PC-9 (cell line): ENCODE measurements at regions of chr3 and their contacts with region 1.

Region 1: DNA sequence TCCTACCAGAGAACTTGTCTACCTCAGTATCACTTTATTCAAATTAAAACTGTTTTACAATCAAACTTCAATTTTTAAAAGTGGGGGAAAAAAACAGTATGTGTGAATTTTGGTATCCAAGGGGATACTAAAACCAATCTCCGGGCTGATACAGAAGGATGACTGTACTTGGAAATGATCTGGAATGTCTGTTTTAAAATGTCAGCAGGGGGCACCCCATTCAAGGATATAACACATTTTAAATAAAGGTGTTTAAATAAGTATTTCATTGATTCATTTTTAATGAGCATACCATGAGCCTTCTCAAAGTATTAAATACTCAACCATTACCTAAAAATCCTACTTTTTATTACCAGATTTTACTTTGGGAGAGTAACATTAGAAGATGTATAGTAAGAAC is 67.9 kb downstream of the ULK4 start:
- DNase-seq: peak in 1 of 2 experiments; percentile 7
- H3K4me3 ChIP-seq: no peak overlapping the region
- H3K27ac ChIP-seq: no peak overlapping the region
- H3K4me1 ChIP-seq: no peaks in the 10 kb centered on the region
- H3K27me3 ChIP-seq: no peaks in the 10 kb centered on the region
- CTCF ChIP-seq: peak; percentile 71

Region 2: DNA sequence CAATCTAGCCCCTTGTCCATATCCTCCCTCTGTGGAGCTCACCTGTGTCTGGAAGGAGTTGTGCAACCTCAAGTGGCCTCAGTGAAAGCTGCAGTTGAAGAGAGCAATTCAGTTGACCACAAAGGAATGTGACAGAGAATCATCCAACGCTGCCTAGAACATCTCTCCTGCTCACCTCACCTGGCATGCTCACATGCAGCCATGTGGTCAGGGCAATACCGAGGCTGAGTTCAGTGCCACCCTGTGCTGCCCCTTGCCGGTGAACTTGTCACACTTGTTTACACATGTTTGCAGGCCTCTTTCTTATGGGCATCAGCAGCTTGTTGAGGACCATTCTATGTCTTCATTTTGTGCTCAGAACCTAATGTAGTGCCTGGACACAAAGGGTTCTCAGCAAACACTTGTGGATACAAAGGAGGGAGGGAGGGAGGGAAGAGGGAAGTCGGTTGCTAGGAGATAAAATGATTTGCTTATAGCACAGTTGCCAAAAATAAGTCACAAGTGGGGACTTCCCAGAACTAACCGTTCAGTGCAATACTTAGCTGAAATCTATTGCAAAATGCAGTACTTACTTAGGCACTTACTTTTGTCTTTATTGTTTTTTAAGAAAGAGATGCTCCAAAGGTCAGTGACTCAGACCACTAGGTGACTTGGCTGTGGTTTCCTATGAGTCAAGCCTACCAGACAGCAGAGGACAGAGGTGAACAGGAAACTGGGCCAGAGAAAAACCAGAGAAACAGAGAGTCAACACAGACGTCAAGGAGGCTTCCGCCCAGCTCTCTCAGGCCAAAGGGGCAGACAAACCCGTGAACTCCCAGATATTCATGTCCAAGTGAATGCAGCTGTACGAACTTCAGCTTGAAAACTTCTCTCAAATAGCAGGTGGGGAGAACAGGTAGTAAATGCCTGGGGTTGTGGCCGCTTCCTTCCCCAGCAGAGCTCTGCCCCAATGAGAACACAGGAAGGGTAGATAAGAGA is 922.5 kb before region 1 on chr3:
- CTCF ChIA-PET with region 1: no interaction called
- POLR2A ChIA-PET with region 1: no interaction called
- intact Hi-C with region 1: no loop called
- DNase-seq: peak; percentile 75 to 98
- H3K4me3 ChIP-seq: no peak overlapping the region; the same call in 1 of the 2 replicates
- H3K27ac ChIP-seq: peak overlapping the region; percentile 92
- H3K4me1 ChIP-seq: peaks cover 32% of the 10 kb centered on the region
- H3K27me3 ChIP-seq: no peaks in the 10 kb centered on the region
- CTCF ChIP-seq: no peak; the same call in 1 of the 2 replicates

Region 3: DNA sequence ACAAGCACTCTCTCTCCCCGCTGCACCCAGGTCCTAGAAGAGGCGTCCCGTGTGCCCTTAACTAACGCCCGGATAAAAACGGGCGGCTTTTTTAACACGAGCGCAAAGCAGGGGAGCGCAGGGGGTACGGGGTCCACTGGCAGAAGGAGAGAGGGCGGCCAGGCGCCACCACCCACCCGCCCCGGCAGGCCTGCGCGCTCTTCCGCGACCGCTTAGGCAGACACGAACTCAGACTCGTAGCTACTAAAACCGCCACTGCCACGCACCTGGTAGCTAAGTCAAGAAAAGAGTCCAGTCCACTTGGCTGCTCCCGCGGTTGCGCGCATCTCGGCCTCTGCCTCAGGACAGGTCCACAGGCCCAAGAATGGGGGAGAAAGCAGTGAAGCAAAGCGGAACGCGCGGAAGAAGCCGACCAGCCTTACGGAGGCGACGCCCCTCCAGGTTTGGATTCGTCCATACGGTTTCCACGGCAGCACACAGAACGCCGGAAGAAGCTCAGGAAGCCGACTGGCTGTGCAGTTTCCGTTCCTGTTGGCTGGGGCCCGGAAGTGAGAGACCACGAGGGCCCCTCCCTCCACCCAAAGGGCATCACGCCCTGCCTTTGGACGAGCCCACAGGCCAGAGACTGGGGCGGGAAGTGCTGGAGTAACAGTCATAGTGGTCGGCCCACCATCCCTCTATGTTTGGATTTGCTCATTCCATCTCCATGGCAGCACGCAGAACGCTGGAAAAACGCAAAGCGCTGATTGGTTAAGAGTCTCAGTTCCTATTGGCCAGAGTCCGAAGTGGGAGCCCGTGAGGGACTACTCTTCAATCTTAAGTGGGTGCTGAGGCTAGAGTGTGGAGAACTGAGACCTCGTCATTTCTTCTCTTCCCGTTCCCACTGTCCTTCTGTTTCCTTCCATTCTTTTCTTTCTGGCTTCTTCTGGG is 68.0 kb after region 1 on chr3 and contains the start of gene ULK4:
- CTCF ChIA-PET with region 1: no interaction called
- POLR2A ChIA-PET with region 1: no interaction called
- intact Hi-C with region 1: no loop called
- DNase-seq: peak; percentile 97
- H3K4me3 ChIP-seq: peak within 1 kb of the TSS; percentile 93
- H3K27ac ChIP-seq: peak within 1 kb of the TSS; percentile 18; the same call in 1 of the 2 replicates
- H3K4me1 ChIP-seq: 0 out of 2 replicates have a peak, but pooled peaks cover 14% of the 10 kb centered on the region
- H3K27me3 ChIP-seq: no peaks in the 10 kb centered on the region
- CTCF ChIP-seq: no peak
- total RNA-seq, gene ULK4: 5.9 and 8.7 TPM in 2 replicates

Region 4: GRCh38 chr3:42012935-42013690 is 119.1 kb after region 1 on chr3:
- CTCF ChIA-PET with region 1: no interaction called
- POLR2A ChIA-PET with region 1: no interaction called
- intact Hi-C with region 1: loop called (anchors 10 kb)
- DNase-seq: peak in 1 of 2 experiments; percentile 55
- H3K4me3 ChIP-seq: peak overlapping the region; percentile 66; the same call in 1 of the 2 replicates
- H3K27ac ChIP-seq: no peak overlapping the region
- H3K4me1 ChIP-seq: peaks cover 14% of the 10 kb centered on the region; the same call in 1 of the 2 replicates
- H3K27me3 ChIP-seq: no peaks in the 10 kb centered on the region
- CTCF ChIP-seq: no peak

Region 5: DNA sequence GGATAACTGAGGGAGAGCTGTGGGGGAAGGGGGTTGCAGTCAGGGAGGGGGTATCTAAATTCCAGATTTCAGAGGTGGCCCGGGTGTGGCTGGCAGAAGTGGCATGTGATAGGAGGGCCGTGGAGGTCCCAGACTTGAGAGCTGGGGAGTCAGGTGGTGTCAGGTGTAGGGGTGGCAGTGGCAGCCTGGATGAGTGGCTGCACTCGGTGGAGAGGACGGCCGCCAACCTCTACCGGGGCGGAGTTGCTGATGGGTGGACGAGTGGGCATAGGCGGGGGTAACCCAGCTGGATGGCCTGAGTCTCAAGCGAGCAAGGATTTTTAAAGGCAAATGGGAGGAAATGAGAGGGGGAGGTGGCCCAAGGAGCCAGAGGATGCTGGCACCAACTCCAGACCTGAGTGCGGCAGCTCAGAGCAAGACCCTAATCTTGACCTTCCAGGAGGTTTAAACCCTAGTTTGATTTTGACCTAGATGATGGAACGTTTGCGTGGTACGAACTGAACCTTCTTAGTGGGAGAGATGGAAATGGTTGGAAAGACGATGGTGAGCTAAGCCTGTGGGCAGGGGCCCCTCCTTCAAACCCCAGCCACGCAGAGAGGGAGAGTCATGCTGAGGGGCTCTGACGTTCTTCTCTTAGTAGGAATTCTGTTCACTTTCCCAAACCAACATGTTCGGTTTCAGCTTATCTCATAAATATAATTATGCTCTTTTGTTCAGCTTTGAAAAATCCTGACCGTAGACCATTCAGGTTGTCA is 205.2 kb after region 1 on chr3:
- CTCF ChIA-PET with region 1: interaction called, 5 read pairs
- POLR2A ChIA-PET with region 1: no interaction called
- intact Hi-C with region 1: loop called (anchors 1 kb)
- DNase-seq: no peak
- H3K4me3 ChIP-seq: no peak overlapping the region
- H3K27ac ChIP-seq: no peak overlapping the region
- H3K4me1 ChIP-seq: no peaks in the 10 kb centered on the region; the same call in 1 of the 2 replicates
- H3K27me3 ChIP-seq: no peaks in the 10 kb centered on the region
- CTCF ChIP-seq: no peak

Region 6: GRCh38 chr3:42190701-42191462 is 296.9 kb after region 1 on chr3:
- CTCF ChIA-PET with region 1: interaction called, 3 read pairs
- POLR2A ChIA-PET with region 1: interaction called, 7 read pairs
- intact Hi-C with region 1: loop called (anchors 10 kb)
- DNase-seq: peak; percentile 45 to 66
- H3K4me3 ChIP-seq: no peak overlapping the region
- H3K27ac ChIP-seq: no peak overlapping the region
- H3K4me1 ChIP-seq: no peaks in the 10 kb centered on the region
- H3K27me3 ChIP-seq: no peaks in the 10 kb centered on the region
- CTCF ChIP-seq: peak; percentile 88

Region 7: GRCh38 chr3:42229942-42230688 is 336.1 kb after region 1 on chr3:
- CTCF ChIA-PET with region 1: no interaction called
- POLR2A ChIA-PET with region 1: no interaction called
- intact Hi-C with region 1: loop called (anchors 1 kb)
- DNase-seq: peak; percentile 30 to 42
- H3K4me3 ChIP-seq: no peak overlapping the region
- H3K27ac ChIP-seq: no peak overlapping the region
- H3K4me1 ChIP-seq: no peaks in the 10 kb centered on the region
- H3K27me3 ChIP-seq: no peaks in the 10 kb centered on the region
- CTCF ChIP-seq: peak; percentile 71

Region 8: DNA sequence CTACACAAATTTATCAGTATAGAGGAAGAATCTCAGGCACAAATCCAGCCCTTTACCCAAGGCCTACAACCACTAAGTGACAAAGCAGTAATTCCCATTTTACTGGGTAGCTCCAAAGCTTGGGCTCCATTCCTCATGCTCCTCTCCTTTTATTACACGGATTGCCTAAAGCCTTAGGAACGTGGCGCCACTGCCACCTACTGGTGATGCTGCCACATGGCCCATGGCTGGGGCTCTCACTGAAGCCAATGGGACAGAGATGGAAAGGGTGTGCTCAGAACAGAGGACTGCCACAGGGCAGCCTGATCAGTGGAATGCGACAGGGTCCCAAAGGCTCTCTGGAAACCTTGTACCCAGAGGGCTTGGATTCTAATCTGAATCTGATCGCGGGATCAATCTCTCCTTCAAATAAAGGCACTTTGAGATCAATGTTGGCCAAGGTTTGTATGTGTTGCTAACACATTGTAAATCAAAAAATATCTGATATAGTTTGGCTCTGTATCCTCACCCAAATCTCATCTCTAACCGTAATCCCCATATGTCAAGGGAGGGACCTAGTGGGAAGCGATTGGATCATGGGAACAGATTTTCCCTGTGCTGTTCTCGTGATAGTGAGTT is 550.0 kb after region 1 on chr3:
- CTCF ChIA-PET with region 1: no interaction called
- POLR2A ChIA-PET with region 1: no interaction called
- intact Hi-C with region 1: loop called (anchors 5 kb)
- DNase-seq: peak; percentile 59 to 83
- H3K4me3 ChIP-seq: no peak overlapping the region
- H3K27ac ChIP-seq: no peak overlapping the region
- H3K4me1 ChIP-seq: no peaks in the 10 kb centered on the region
- H3K27me3 ChIP-seq: no peaks in the 10 kb centered on the region
- CTCF ChIP-seq: peak; percentile 94

Region 9: GRCh38 chr3:42547401-42547945 is 653.5 kb after region 1 on chr3:
- CTCF ChIA-PET with region 1: no interaction called
- POLR2A ChIA-PET with region 1: no interaction called
- intact Hi-C with region 1: loop called (anchors 10 kb)
- DNase-seq: peak in 1 of 2 experiments; percentile 55
- H3K4me3 ChIP-seq: no peak overlapping the region
- H3K27ac ChIP-seq: no peak overlapping the region
- H3K4me1 ChIP-seq: 0 out of 2 replicates have a peak, but pooled peaks cover 9% of the 10 kb centered on the region
- H3K27me3 ChIP-seq: no peaks in the 10 kb centered on the region
- CTCF ChIP-seq: peak; percentile 90